CD8-positive, alpha-beta T cell (primary cell): ENCODE measurements at regions of chr12 and their contacts with region 1.

Region 1: DNA sequence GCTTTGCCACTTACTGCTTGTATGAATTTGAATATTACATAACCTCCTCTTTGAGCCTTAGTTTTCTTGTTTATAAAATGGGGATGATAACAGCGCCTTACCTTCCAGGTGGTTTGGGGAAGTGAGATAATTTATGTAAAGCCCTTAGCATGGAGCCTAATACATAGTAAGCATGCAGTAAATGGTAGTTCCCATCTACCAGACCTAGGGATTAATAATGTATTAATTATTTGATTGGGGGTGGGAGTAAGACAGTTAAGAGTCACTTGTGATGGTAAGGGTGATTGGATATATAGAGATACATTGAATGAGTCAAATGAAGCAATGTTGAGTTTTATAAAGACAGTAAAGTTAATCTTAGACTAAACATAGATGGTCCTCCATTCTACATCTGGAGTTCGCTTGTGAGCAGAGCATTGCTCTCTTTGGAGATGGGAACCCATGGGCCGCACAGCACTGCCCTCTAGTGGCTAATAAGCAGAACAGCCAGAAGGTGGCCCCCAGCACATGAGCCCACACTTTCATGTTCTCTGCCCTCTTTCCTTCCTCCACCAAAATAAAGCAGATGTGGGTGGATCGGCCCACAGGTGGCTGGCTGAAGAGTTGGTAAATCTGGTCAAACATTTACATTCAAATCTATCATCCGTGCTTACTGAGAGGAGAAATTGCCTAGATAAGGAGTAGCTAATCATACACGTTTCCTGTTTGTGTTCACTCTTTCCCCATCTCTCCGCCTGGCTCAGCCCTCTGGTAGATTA is 26.5 kb upstream of the TAMALIN start:
- DNase-seq: peak; percentile 43 to 83 (median 68)
- ATAC-seq: peak; percentile 100
- H3K4me3 ChIP-seq: no peak overlapping the region
- H3K4me3 Mint-ChIP-seq: no peak overlapping the region
- H3K27ac ChIP-seq: no peak overlapping the region
- H3K27ac Mint-ChIP-seq: no peak overlapping the region
- H3K4me1 ChIP-seq: peaks cover 7% of the 10 kb centered on the region
- H3K4me1 Mint-ChIP-seq: peaks cover 26% of the 10 kb centered on the region
- H3K27me3 ChIP-seq: no peaks in the 10 kb centered on the region
- H3K27me3 Mint-ChIP-seq: no peaks in the 10 kb centered on the region
- CTCF ChIP-seq: peak; percentile 95

Region 2: GRCh38 chr12:51994959-51995358 is 14.7 kb after region 1 on chr12:
- CTCF ChIA-PET with region 1: interaction called, 24 read pairs
- POLR2A ChIA-PET with region 1: no interaction called
- intact Hi-C with region 1: no loop called
- DNase-seq: no peak
- ATAC-seq: no peak
- H3K4me3 ChIP-seq: no peak overlapping the region
- H3K4me3 Mint-ChIP-seq: no peak overlapping the region
- H3K27ac ChIP-seq: no peak overlapping the region
- H3K27ac Mint-ChIP-seq: no peak overlapping the region
- H3K4me1 ChIP-seq: no peaks in the 10 kb centered on the region
- H3K4me1 Mint-ChIP-seq: peaks cover 5% of the 10 kb centered on the region
- H3K27me3 ChIP-seq: no peaks in the 10 kb centered on the region
- H3K27me3 Mint-ChIP-seq: no peaks in the 10 kb centered on the region
- CTCF ChIP-seq: no peak